RWPE1 (cell line): ENCODE measurements at regions of chr1 and their contacts with region 1.

Region 1: DNA sequence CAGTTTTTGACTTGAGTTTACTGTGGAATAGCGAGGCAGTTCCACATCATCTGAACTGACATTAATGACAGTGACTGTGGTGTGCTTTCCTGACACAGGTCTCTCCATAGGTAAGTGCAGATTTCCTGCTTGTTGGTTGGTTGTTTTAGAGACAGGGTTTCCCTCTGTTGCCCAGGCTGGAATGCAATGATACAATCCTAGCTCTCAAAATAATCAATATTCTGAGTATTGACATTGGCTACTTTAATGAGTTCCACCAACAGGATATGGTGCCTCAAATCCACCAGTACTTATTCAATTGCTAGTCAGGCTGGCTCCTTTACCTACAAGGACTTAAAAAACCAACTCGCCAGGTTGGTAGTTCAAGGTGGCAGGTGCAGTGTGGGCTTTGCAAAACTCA is 63.8 kb downstream of the CLSTN1 start:
- DNase-seq: no peak
- H3K27ac ChIP-seq: peak overlapping the region; percentile 45
- CTCF ChIP-seq: no peak

Region 2: GRCh38 chr1:9737057-9737456 is 22.9 kb before region 1 on chr1:
- CTCF ChIA-PET with region 1: no interaction called
- POLR2A ChIA-PET with region 1: no interaction called
- DNase-seq: no peak
- H3K27ac ChIP-seq: peak overlapping the region; percentile 12; the same call in 1 of the 2 replicates
- CTCF ChIP-seq: no peak

Region 3: DNA sequence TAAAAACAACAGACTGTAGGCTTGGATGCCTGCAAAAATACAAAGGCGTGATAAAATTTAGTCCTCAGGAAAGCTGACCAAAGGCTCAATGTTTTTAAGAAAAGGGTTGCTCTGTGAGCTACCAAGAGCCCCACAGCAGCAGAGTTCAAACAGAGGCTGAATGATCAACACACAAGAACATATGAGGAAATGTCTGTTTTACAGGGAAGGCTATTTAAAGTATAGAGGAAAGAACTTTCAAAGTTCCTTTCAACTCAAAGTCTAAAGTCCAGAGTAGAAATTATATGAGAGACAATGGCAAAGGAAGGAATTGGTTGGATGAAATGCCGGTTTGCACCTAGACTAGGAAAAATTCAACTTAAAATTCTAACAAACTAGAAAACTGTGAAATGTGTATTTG is 55.2 kb after region 1 on chr1:
- CTCF ChIA-PET with region 1: no interaction called
- POLR2A ChIA-PET with region 1: no interaction called
- DNase-seq: no peak
- H3K27ac ChIP-seq: peak overlapping the region; percentile 46; the same call in 1 of the 2 replicates
- CTCF ChIP-seq: no peak

Region 4: GRCh38 chr1:10360045-10360444 is 600.1 kb after region 1 on chr1:
- CTCF ChIA-PET with region 1: no interaction called
- POLR2A ChIA-PET with region 1: interaction called, 14 read pairs
- DNase-seq: no peak
- H3K27ac ChIP-seq: no peak overlapping the region
- CTCF ChIP-seq: no peak